ENCODE measurements at regions of chr19 and their contacts with region 1.

Region 1: DNA sequence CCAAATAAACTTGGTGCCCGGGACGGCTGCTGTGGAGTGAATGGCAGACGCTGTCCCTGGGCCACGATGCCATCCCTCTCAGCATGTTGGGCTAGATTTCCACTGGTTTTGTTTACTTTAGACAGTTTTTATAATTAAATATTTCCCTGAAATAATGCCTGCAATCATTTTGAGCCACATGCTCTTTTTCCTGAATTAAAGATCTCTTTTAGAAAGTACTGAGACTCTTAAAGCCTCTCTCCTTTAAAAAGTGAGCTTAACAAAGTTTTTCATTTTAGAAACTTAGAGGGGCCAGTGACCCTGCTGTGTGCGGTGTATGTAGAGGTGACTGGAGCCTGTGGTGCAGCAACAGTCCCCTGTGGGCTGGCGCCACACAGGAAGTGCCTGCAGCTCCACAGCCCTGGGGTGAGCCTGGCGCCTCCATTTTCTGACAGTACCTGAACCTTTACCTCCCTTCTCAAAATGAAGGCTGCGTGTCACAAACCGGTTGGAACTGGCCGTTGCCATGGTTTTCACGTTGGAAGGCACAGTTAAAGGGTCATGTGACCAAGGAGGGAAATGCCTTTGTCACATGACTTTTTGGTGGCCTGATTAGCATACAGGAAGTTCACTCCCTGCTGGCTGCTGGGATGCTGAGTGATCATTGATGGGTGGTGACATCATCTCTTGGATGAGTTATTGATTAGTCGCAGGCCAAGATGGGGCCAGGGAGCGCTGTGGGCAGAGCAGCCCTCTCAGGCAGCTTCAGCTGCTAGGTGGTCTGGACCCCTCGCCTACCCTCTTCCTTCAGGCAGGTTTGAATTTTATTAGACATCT is 26.3 kb downstream of the TSSK6 start:
- DNase-seq: peak; percentile 76 to 98 (median 91)
- ATAC-seq: peak; percentile 85
- H3K4me3 ChIP-seq: peak overlapping the region in 1 of 2 experiments; percentile 0
- H3K4me3 Mint-ChIP-seq: peak overlapping the region; percentile 64
- H3K27ac ChIP-seq: peak overlapping the region; percentile 76 to 97
- H3K27ac Mint-ChIP-seq: peak overlapping the region; percentile 96
- H3K4me1 ChIP-seq: peaks cover 57% of the 10 kb centered on the region
- H3K4me1 Mint-ChIP-seq: peaks cover 55% of the 10 kb centered on the region
- H3K27me3 ChIP-seq: no peaks in the 10 kb centered on the region
- H3K27me3 Mint-ChIP-seq: no peaks in the 10 kb centered on the region
- CTCF ChIP-seq: no peak

Region 2: GRCh38 chr19:19145684-19146608 is 343.1 kb before region 1 on chr19:
- CTCF ChIA-PET with region 1: interaction called, 3 read pairs
- POLR2A ChIA-PET with region 1: no interaction called
- intact Hi-C with region 1: loop called in 1 of 2 experiments (anchors 1 kb)
- DNase-seq: peak; percentile 75 to 92 (median 82)
- ATAC-seq: peak; percentile 100
- H3K4me3 ChIP-seq: no peak overlapping the region
- H3K4me3 Mint-ChIP-seq: no peak overlapping the region
- H3K27ac ChIP-seq: no peak overlapping the region
- H3K27ac Mint-ChIP-seq: no peak overlapping the region
- H3K4me1 ChIP-seq: no peaks in the 10 kb centered on the region
- H3K4me1 Mint-ChIP-seq: no peaks in the 10 kb centered on the region
- H3K27me3 ChIP-seq: no peaks in the 10 kb centered on the region
- H3K27me3 Mint-ChIP-seq: no peaks in the 10 kb centered on the region
- CTCF ChIP-seq: peak; percentile 75

Region 3: GRCh38 chr19:19354932-19355331 is 134.2 kb before region 1 on chr19:
- CTCF ChIA-PET with region 1: interaction called, 12 read pairs
- POLR2A ChIA-PET with region 1: no interaction called
- intact Hi-C with region 1: no loop called
- DNase-seq: no peak
- ATAC-seq: no peak
- H3K4me3 ChIP-seq: no peak overlapping the region
- H3K4me3 Mint-ChIP-seq: no peak overlapping the region
- H3K27ac ChIP-seq: no peak overlapping the region
- H3K27ac Mint-ChIP-seq: no peak overlapping the region
- H3K4me1 ChIP-seq: peaks cover 6% of the 10 kb centered on the region
- H3K4me1 Mint-ChIP-seq: peaks cover 16% of the 10 kb centered on the region
- H3K27me3 ChIP-seq: no peaks in the 10 kb centered on the region
- H3K27me3 Mint-ChIP-seq: no peaks in the 10 kb centered on the region
- CTCF ChIP-seq: no peak

Region 4: GRCh38 chr19:19372656-19373416 is 116.2 kb before region 1 on chr19:
- CTCF ChIA-PET with region 1: interaction called, 202 read pairs
- POLR2A ChIA-PET with region 1: interaction called, 4 read pairs
- intact Hi-C with region 1: no loop called
- DNase-seq: peak in 6 of 9 experiments; percentile 17 to 74 (median 48)
- ATAC-seq: peak; percentile 71
- H3K4me3 ChIP-seq: peak overlapping the region in 1 of 2 experiments; percentile 20
- H3K4me3 Mint-ChIP-seq: peak overlapping the region; percentile 38
- H3K27ac ChIP-seq: peak overlapping the region; percentile 7 to 87
- H3K27ac Mint-ChIP-seq: peak overlapping the region; percentile 82
- H3K4me1 ChIP-seq: peaks cover 12% of the 10 kb centered on the region
- H3K4me1 Mint-ChIP-seq: peaks cover 7% of the 10 kb centered on the region
- H3K27me3 ChIP-seq: no peaks in the 10 kb centered on the region
- H3K27me3 Mint-ChIP-seq: no peaks in the 10 kb centered on the region
- CTCF ChIP-seq: no peak

Region 5: GRCh38 chr19:19404879-19405860 is 83.9 kb before region 1 on chr19 and contains the start of gene GATAD2A:
- CTCF ChIA-PET with region 1: interaction called, 20 read pairs
- POLR2A ChIA-PET with region 1: interaction called, 23 read pairs
- intact Hi-C with region 1: loop called (anchors 1 kb)
- DNase-seq: peak; percentile 81 to 98 (median 92)
- ATAC-seq: peak; percentile 89
- H3K4me3 ChIP-seq: peak within 1 kb of the TSS; percentile 67 to 85
- H3K4me3 Mint-ChIP-seq: peak within 1 kb of the TSS; percentile 97
- H3K27ac ChIP-seq: peak within 1 kb of the TSS; percentile 70 to 86
- H3K27ac Mint-ChIP-seq: peak within 1 kb of the TSS; percentile 89
- H3K4me1 ChIP-seq: peaks cover 44% of the 10 kb centered on the region
- H3K4me1 Mint-ChIP-seq: peaks cover 62% of the 10 kb centered on the region
- H3K27me3 ChIP-seq: no peaks in the 10 kb centered on the region
- H3K27me3 Mint-ChIP-seq: no peaks in the 10 kb centered on the region
- CTCF ChIP-seq: no peak
- total RNA-seq, gene GATAD2A: 135 to 142 TPM

Region 6: GRCh38 chr19:19451429-19452242 is 37.4 kb before region 1 on chr19:
- CTCF ChIA-PET with region 1: interaction called, 11 read pairs
- POLR2A ChIA-PET with region 1: interaction called, 7 read pairs
- intact Hi-C with region 1: loop called (anchors 5 kb)
- DNase-seq: peak in 6 of 9 experiments; percentile 34 to 88 (median 58)
- ATAC-seq: peak; percentile 59
- H3K4me3 ChIP-seq: peak overlapping the region in 1 of 2 experiments; percentile 18
- H3K4me3 Mint-ChIP-seq: peak overlapping the region; percentile 69
- H3K27ac ChIP-seq: peak overlapping the region; percentile 31 to 70
- H3K27ac Mint-ChIP-seq: peak overlapping the region; percentile 95
- H3K4me1 ChIP-seq: peaks cover 70% of the 10 kb centered on the region
- H3K4me1 Mint-ChIP-seq: peaks cover 71% of the 10 kb centered on the region
- H3K27me3 ChIP-seq: no peaks in the 10 kb centered on the region
- H3K27me3 Mint-ChIP-seq: no peaks in the 10 kb centered on the region
- CTCF ChIP-seq: no peak

Region 7: GRCh38 chr19:19515764-19516519 is 26.9 kb after region 1 on chr19 and contains the start of gene NDUFA13:
- CTCF ChIA-PET with region 1: interaction called, 11 read pairs
- POLR2A ChIA-PET with region 1: interaction called, 5 read pairs
- intact Hi-C with region 1: loop called in 1 of 2 experiments (anchors 1 kb)
- DNase-seq: peak; percentile 87 to 99 (median 94)
- ATAC-seq: peak; percentile 89
- H3K4me3 ChIP-seq: peak within 1 kb of the TSS; percentile 94 to 99
- H3K4me3 Mint-ChIP-seq: peak within 1 kb of the TSS; percentile 97
- H3K27ac ChIP-seq: peak within 1 kb of the TSS; percentile 80 to 87
- H3K27ac Mint-ChIP-seq: peak within 1 kb of the TSS; percentile 96
- H3K4me1 ChIP-seq: peaks cover 23% of the 10 kb centered on the region
- H3K4me1 Mint-ChIP-seq: peaks cover 30% of the 10 kb centered on the region
- H3K27me3 ChIP-seq: no peaks in the 10 kb centered on the region
- H3K27me3 Mint-ChIP-seq: no peaks in the 10 kb centered on the region
- CTCF ChIP-seq: no peak
- total RNA-seq, gene NDUFA13: 151 to 166 TPM

Region 8: DNA sequence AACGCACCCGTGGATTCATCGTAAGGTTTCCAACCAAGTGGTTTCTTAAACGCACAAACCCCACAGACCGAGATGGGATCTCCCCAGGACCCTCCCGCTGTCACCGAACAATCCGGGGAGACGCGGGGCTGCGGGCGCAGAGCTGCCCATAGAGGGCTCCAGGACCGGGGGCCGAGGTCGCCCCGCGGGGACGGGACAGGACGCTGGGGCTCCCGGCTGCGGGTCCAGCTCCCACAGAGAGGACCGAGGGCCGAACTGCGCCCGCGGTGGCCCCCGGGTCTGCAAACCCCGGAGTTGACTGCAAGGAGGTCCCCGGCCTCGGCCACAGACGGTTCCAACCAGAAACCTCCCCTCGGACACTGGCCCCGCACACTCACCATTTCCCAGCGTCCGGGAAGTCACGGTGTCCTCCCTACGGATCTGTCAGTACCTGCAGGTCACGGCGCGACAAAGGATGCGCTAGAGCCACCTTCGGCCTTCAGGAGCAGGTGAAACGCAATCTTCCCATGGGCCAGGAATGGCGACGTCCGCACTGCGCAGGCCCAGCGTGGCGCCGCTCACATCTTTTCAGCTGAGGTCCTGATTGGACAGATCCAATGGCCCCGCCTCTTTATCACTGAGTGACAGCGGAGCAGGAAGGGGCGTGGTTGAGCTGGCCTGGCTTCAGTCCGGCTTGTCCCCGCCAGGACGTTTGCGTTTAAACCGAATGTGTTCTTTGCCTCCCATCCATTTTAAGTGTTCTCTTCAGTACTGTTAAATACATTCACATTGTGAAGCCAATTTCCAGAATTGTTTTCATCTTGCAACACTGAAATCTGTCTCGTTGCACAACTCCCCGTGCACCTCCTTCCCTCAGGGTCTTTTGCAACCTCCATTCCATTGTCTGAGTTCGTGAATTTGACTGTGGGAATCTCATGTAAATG is 243.8 kb after region 1 on chr19 and contains the start of gene ZNF14:
- CTCF ChIA-PET with region 1: no interaction called
- POLR2A ChIA-PET with region 1: no interaction called
- intact Hi-C with region 1: no loop called
- DNase-seq: peak; percentile 77 to 96 (median 92)
- ATAC-seq: peak; percentile 99
- H3K4me3 ChIP-seq: peak within 1 kb of the TSS; percentile 84 to 99
- H3K4me3 Mint-ChIP-seq: peak within 1 kb of the TSS; percentile 100
- H3K27ac ChIP-seq: peak within 1 kb of the TSS; percentile 79 to 82
- H3K27ac Mint-ChIP-seq: peak within 1 kb of the TSS; percentile 93
- H3K4me1 ChIP-seq: peaks cover 13% of the 10 kb centered on the region
- H3K4me1 Mint-ChIP-seq: peaks cover 29% of the 10 kb centered on the region
- H3K27me3 ChIP-seq: no peaks in the 10 kb centered on the region
- H3K27me3 Mint-ChIP-seq: no peaks in the 10 kb centered on the region
- CTCF ChIP-seq: no peak
- total RNA-seq, gene ZNF14: 40.7 to 44.9 TPM